ENCODE measurements at regions of chr10 and their contacts with region 1.

Region 1: DNA sequence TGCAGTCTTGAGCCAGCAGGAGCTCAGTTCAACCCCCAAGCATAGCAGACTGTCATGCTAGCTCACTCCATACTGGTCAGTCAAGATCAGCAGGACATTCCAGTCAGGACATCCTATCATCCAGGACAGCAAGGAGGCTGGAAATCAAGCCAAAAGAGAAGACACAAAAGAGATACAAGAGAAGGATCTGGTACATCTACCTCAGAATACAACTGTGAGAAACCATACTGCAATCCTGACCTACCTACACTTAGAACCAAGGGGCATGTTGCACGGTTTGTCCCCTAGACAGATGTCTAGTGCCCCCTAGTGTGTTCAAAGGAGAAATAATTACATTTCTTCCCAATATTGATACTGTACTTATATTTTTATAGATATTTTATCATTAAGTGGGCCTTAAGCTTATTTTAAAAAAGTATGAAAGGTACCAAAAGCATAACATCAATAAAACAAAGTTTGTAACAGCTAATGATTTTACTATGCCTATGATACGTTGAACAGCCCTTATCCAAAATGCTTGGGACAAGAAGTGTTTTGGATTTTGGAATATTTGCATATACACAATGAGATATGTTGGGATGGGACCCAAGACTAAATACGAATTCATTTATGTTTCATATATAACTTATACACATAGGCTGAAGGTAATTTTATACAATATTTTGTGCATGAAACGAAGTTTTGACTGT is 26.7 kb downstream of the ERCC6 start:
- DNase-seq: peak in 1 of 2 experiments; percentile 53
- H3K4me3 ChIP-seq: no peak overlapping the region
- H3K4me3 Mint-ChIP-seq: no peak overlapping the region
- H3K27ac Mint-ChIP-seq: no peak overlapping the region
- H3K4me1 ChIP-seq: no peaks in the 10 kb centered on the region
- H3K4me1 Mint-ChIP-seq: no peaks in the 10 kb centered on the region
- H3K27me3 ChIP-seq: no peaks in the 10 kb centered on the region
- H3K27me3 Mint-ChIP-seq: no peaks in the 10 kb centered on the region
- CTCF ChIP-seq: peak; percentile 81 to 90

Region 2: GRCh38 chr10:49500418-49500817 is 11.8 kb before region 1 on chr10:
- CTCF ChIA-PET with region 1: interaction called, 10 read pairs
- POLR2A ChIA-PET with region 1: no interaction called
- intact Hi-C with region 1: no loop called
- DNase-seq: peak in 1 of 2 experiments; percentile 15
- H3K4me3 ChIP-seq: no peak overlapping the region
- H3K4me3 Mint-ChIP-seq: no peak overlapping the region
- H3K27ac Mint-ChIP-seq: no peak overlapping the region
- H3K4me1 ChIP-seq: no peaks in the 10 kb centered on the region
- H3K4me1 Mint-ChIP-seq: no peaks in the 10 kb centered on the region
- H3K27me3 ChIP-seq: no peaks in the 10 kb centered on the region
- H3K27me3 Mint-ChIP-seq: no peaks in the 10 kb centered on the region
- CTCF ChIP-seq: no peak

Region 3: DNA sequence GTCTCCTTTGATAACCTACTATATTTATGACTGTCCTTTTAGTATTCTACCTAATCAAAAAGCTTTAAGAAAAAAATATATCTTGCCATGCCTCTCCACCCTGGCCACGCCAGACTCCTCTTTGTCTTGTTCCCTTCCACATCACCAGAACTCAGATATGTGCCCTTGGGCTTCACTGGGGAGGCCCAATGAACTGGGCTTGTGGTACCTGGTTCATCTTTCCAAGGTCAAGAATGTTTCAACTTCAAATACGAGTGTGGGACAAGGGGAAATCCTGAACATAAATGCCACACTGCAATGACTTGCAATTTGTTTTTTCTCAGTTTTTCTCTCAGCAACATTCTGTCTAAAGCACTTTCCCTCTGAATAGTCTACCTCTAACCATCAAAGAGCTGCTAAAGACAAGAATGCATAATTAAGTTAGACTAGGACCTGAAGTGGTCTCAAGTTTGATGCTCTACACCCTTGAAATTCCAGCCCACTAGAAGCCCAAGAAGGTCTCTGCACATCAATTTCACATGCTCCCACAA is 16.8 kb after region 1 on chr10:
- CTCF ChIA-PET with region 1: no interaction called
- POLR2A ChIA-PET with region 1: no interaction called
- intact Hi-C with region 1: no loop called
- DNase-seq: no peak
- H3K4me3 ChIP-seq: no peak overlapping the region
- H3K4me3 Mint-ChIP-seq: no peak overlapping the region
- H3K27ac Mint-ChIP-seq: no peak overlapping the region
- H3K4me1 ChIP-seq: no peaks in the 10 kb centered on the region
- H3K4me1 Mint-ChIP-seq: no peaks in the 10 kb centered on the region
- H3K27me3 ChIP-seq: no peaks in the 10 kb centered on the region
- H3K27me3 Mint-ChIP-seq: no peaks in the 10 kb centered on the region
- CTCF ChIP-seq: no peak

Region 4: DNA sequence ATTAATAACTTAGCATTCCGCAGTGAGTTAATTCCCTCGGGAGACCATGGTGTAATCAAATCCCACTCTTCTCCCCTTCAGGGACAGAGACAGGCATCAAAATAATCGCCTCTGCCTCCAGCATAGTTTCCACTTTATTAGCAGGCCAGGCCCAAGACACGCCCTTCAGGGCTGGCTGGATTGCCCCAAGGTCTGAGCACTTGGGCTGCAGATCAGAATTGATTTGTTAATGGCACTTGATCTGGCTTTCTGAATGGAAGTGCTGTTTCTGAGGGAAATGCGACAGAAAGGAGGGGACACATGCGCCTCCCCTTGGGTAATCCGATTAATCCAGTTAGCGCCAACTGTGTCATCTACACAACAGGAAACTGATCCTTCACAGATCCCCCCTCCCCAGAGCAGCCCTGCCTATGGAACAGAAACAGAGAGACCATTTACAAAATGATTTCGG is 117.2 kb after region 1 on chr10:
- CTCF ChIA-PET with region 1: no interaction called
- POLR2A ChIA-PET with region 1: no interaction called
- intact Hi-C with region 1: no loop called
- DNase-seq: peak in 1 of 2 experiments; percentile 18
- H3K4me3 ChIP-seq: no peak overlapping the region
- H3K4me3 Mint-ChIP-seq: no peak overlapping the region
- H3K27ac Mint-ChIP-seq: no peak overlapping the region
- H3K4me1 ChIP-seq: no peaks in the 10 kb centered on the region
- H3K4me1 Mint-ChIP-seq: no peaks in the 10 kb centered on the region
- H3K27me3 ChIP-seq: no peaks in the 10 kb centered on the region
- H3K27me3 Mint-ChIP-seq: peaks cover 5% of the 10 kb centered on the region
- CTCF ChIP-seq: no peak